ENCODE measurements at regions of chr6 and their contacts with region 1.

Region 1: DNA sequence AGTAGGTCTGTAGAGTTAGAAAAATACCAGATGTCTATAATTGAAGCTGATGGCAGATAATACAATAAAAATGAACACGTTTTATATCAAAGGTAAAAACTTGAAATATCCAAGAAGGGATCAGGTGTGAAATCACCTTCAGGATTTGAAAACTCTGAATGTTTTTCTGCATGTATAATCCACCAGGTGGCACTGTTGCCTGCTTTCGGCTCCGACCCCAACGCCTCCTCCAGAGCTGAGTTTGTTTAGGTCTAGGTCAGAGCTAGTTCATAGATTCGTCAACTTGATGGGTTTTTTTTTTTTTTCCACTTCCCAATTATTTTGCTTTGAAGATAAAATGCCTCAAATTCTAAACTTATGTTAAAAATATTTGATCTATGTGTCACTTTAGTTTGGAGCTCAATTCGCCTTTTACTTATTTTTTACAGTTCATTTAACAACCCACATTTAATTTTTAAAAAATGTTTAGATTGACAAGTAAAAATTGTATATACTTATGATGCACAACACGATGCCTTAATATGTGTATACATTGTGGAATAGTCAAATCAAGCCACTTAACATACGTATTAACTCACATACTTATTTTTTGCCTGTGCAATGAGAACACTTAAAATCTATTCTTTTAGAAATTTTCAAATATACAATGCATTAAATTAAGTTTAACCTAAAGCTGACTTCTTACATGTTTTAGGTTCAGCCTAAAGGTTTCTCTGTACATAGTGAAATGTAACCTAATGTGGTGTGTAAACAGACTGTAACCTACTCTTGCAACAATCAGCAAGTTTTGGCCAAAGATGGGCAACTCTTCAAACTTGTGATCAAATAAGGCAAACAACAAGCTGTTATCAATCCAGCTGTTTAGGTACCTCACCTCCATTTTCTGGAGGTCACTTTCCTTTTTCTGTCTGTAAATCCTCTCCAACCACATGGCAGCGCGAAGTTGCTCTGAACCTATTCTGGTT is 39.4 kb upstream of the ENPP4 start:
- DNase-seq: peak; percentile 52
- ATAC-seq: peak; percentile 56 to 61

Region 2: GRCh38 chr6:46042355-46042999 is 47.9 kb before region 1 on chr6:
- intact Hi-C with region 1: no loop called
- DNase-seq: no peak
- ATAC-seq: peak; percentile 64 to 73

Region 3: DNA sequence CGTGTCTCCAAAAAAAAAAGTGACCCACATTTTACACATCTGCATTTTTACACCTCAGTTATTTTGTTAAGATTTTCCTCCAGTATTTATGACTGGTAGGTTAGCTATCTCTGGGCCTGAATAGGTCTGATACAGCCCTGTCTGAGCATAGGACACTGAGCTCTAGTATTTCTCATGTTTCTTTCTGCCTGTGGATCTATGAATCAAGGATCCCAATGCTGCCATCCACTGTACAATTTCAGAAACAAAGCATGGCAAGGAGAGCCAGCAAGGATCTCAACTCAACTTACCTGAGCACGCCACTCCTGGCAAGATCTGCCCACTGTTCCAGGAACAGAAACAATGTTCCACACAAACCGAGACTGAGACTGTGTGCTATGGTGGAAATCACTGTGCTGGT is 116.8 kb after region 1 on chr6:
- intact Hi-C with region 1: loop called in 1 of 2 experiments (anchors 5 kb)
- DNase-seq: no peak
- ATAC-seq: no peak

Region 4: GRCh38 chr6:46410334-46410953 is 320.0 kb after region 1 on chr6:
- intact Hi-C with region 1: loop called (anchors 1 to 10 kb)
- DNase-seq: no peak
- ATAC-seq: peak; percentile 42 to 53

Region 5: GRCh38 chr6:46491628-46492547 is 401.5 kb after region 1 on chr6:
- intact Hi-C with region 1: no loop called
- DNase-seq: peak; percentile 58
- ATAC-seq: peak; percentile 89 to 91